ENCODE measurements at regions of chr2 and their contacts with region 1.

Region 1: DNA sequence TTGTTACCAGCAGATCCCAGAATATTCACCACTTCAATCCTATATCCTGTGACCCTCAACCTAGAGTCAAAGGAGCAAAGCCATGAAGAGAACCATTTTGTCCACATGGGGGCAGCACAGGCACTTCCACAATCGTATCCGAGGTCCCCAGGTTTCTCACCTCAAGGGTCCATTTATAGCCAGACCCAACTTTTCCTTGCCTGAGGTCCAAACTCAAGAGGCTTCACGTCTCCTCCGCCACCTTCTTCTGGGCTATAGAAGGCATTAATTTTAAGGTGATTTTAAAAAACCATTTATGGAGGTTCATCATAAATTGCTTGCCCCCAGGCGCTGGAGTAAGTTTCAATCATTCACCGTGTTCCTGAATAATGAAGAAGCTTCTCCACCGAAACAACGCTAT is 111.6 kb upstream of the NABP1 start:
- DNase-seq: peak; percentile 74
- ATAC-seq: peak; percentile 71
- H3K4me3 Mint-ChIP-seq: no peak overlapping the region
- H3K27ac Mint-ChIP-seq: no peak overlapping the region
- H3K4me1 Mint-ChIP-seq: peaks cover 48% of the 10 kb centered on the region
- H3K27me3 Mint-ChIP-seq: peaks cover 79% of the 10 kb centered on the region

Region 2: GRCh38 chr2:191676790-191677645 is 110.7 kb after region 1 on chr2:
- CTCF ChIA-PET with region 1: interaction called, 10 read pairs
- DNase-seq: peak; percentile 83
- ATAC-seq: peak; percentile 28
- H3K4me3 Mint-ChIP-seq: peak overlapping the region; percentile 100
- H3K27ac Mint-ChIP-seq: peak overlapping the region; percentile 100
- H3K4me1 Mint-ChIP-seq: peaks cover 41% of the 10 kb centered on the region
- H3K27me3 Mint-ChIP-seq: no peaks in the 10 kb centered on the region

Region 3: GRCh38 chr2:191691016-191691735 is 124.8 kb after region 1 on chr2:
- CTCF ChIA-PET with region 1: interaction called, 13 read pairs
- DNase-seq: peak; percentile 63
- ATAC-seq: peak; percentile 84
- H3K4me3 Mint-ChIP-seq: no peak overlapping the region
- H3K27ac Mint-ChIP-seq: no peak overlapping the region
- H3K4me1 Mint-ChIP-seq: peaks cover 29% of the 10 kb centered on the region
- H3K27me3 Mint-ChIP-seq: no peaks in the 10 kb centered on the region